ENCODE measurements at regions of chr3 and their contacts with region 1.

Region 1: DNA sequence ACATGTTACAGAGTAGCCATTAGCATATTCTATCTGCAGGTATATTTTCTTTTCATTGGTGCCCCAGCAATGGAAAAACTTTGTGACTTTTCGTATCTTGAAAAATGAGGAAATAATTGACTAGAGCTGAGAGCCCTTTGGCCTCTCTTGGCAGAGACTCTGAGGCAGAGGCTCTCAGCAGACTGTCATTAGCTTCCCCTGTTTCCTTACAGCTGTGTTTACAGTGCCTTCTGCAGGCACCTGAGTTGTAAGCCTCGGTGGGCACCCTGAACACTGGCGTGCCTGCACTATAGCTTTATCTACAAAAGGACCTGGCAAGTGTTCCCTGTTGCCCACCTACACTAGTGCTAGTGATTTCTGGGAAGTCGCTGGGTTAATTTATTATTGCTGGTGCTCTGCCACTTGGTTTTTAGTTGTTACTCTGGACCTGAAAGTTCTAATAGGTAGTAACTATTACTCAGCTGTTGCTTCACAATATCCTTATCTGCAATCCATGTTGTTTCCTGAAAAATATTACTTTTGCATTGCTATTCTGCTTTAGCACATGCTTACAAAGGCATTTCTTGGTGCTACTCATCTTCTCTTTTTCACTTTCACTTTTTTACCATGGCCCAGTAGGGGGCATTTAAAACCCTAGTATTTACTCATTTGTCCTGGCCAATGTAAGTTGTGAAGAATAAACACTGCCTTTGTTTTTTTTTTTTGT is 7.8 kb upstream of the GPR171 start:
- DNase-seq: no peak
- H3K4me3 ChIP-seq: no peak overlapping the region
- H3K27me3 ChIP-seq: no peaks in the 10 kb centered on the region
- CTCF ChIP-seq: 0 out of 2 replicates have a peak, but pooled peaks have one; percentile 8

Region 2: DNA sequence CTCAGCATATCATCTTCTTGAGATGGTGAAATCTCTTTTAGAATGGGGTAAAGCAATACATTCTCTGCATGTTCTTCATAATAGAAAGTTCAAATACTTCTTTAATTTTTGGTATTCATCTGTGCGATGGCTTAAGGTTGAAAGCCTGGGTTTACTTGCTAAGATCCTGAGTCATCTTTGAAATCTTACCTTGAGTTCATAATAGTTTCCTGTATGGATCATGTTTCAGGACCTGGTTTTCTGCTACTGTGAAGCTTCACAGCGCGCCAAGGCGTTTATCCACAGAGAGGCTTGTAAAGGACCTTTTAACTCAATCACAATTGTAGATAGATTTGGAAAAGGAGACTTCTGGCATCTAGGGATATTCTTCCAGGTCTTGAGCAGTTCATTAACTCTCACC is 86.4 kb before region 1 on chr3:
- CTCF ChIA-PET with region 1: no interaction called
- POLR2A ChIA-PET with region 1: no interaction called
- DNase-seq: no peak
- H3K4me3 ChIP-seq: no peak overlapping the region
- H3K27me3 ChIP-seq: 0 out of 2 replicates have a peak, but pooled peaks cover 2% of the 10 kb centered on the region
- CTCF ChIP-seq: no peak

Region 3: GRCh38 chr3:151197981-151198767 is 12.7 kb before region 1 on chr3:
- CTCF ChIA-PET with region 1: no interaction called
- POLR2A ChIA-PET with region 1: interaction called, 10 read pairs
- DNase-seq: peak; percentile 35
- H3K4me3 ChIP-seq: no peak overlapping the region
- H3K27me3 ChIP-seq: no peaks in the 10 kb centered on the region
- CTCF ChIP-seq: no peak

Measured in BJ (cell line).